ENCODE measurements at regions of chr22 and their contacts with region 1.

Region 1: GRCh38 chr22:22959147-22959827 is 71.7 kb downstream of the IGLL5 start:
- DNase-seq: peak; percentile 90
- ATAC-seq: peak; percentile 52
- H3K4me3 ChIP-seq: no peak overlapping the region
- H3K4me3 Mint-ChIP-seq: no peak overlapping the region
- H3K27ac ChIP-seq: no peak overlapping the region
- H3K27ac Mint-ChIP-seq: peak overlapping the region; percentile 43
- H3K4me1 ChIP-seq: peaks cover 11 to 18% of the 10 kb centered on the region in 2 donors
- H3K4me1 Mint-ChIP-seq: peaks cover 15% of the 10 kb centered on the region
- H3K27me3 ChIP-seq: no peaks in the 10 kb centered on the region
- H3K27me3 Mint-ChIP-seq: no peaks in the 10 kb centered on the region
- CTCF ChIP-seq: peak; percentile 95

Region 2: DNA sequence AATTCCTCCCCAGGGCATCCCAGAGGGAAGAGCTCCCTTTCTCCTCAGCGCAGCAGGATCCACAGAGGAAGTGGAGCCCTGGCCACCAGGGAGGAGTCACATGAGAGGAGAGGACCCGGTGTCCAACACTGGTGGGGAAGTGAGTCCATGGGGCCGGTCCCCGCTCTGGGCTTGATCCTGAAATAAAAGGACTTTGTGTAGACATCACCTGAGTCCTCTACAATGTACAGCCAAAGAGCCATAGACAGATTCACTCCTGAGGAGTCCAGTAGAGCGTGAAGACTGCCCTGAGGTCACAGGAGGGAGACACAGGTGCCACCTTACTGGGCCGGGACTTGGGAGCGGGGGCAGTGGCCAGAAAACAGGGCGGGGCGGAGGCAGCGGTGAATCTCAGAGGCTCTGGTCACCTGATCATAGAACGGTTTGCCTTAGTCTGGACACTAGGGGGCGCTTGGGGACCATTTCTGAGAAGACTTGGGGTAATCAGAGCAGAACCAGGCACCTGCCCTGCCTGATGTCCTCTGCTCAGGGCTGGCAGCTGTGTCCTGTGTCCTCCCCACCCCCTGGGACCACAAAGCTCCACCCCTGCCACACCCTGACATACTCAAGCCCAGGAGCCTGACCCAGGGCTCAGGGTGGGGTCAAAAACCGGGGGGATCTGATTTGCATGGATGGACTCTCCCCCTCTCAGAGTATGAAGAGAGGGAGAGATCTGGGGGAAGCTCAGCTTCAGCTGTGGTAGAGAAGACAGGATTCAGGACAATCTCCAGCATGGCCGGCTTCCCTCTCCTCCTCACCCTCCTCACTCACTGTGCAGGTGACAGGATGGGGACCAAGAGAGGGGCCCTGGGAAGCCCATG is 602.0 kb before region 1 on chr22:
- CTCF ChIA-PET with region 1: interaction called, 10 read pairs
- POLR2A ChIA-PET with region 1: interaction called, 5 read pairs
- intact Hi-C with region 1: loop called (anchors 2 kb)
- DNase-seq: peak; percentile 93
- ATAC-seq: peak; percentile 90
- H3K4me3 ChIP-seq: peak overlapping the region in 3 of 5 experiments; percentile 18 to 27 (median 26)
- H3K4me3 Mint-ChIP-seq: peak overlapping the region; percentile 65
- H3K27ac ChIP-seq: peak overlapping the region; percentile 61 to 71
- H3K27ac Mint-ChIP-seq: peak overlapping the region; percentile 90
- H3K4me1 ChIP-seq: peaks cover 29 to 49% of the 10 kb centered on the region in 2 donors
- H3K4me1 Mint-ChIP-seq: peaks cover 59% of the 10 kb centered on the region
- H3K27me3 ChIP-seq: no peaks in the 10 kb centered on the region
- H3K27me3 Mint-ChIP-seq: no peaks in the 10 kb centered on the region
- CTCF ChIP-seq: peak; percentile 72

Region 3: GRCh38 chr22:22692707-22693530 is 266.4 kb before region 1 on chr22:
- CTCF ChIA-PET with region 1: interaction called, 26 read pairs
- POLR2A ChIA-PET with region 1: no interaction called
- intact Hi-C with region 1: no loop called
- DNase-seq: peak; percentile 83
- ATAC-seq: peak; percentile 81
- H3K4me3 ChIP-seq: no peak overlapping the region
- H3K4me3 Mint-ChIP-seq: peak overlapping the region; percentile 71
- H3K27ac ChIP-seq: peak overlapping the region in 1 of 2 donors; percentile 26
- H3K27ac Mint-ChIP-seq: peak overlapping the region; percentile 85
- H3K4me1 ChIP-seq: peaks cover 28 to 44% of the 10 kb centered on the region in 2 donors
- H3K4me1 Mint-ChIP-seq: peaks cover 34% of the 10 kb centered on the region
- H3K27me3 ChIP-seq: no peaks in the 10 kb centered on the region
- H3K27me3 Mint-ChIP-seq: no peaks in the 10 kb centered on the region
- CTCF ChIP-seq: peak; percentile 87

Region 4: GRCh38 chr22:22779213-22779612 is 180.1 kb before region 1 on chr22:
- CTCF ChIA-PET with region 1: interaction called, 13 read pairs
- POLR2A ChIA-PET with region 1: no interaction called
- intact Hi-C with region 1: no loop called
- DNase-seq: no peak
- ATAC-seq: no peak
- H3K4me3 ChIP-seq: no peak overlapping the region
- H3K4me3 Mint-ChIP-seq: no peak overlapping the region
- H3K27ac ChIP-seq: no peak overlapping the region
- H3K27ac Mint-ChIP-seq: no peak overlapping the region
- H3K4me1 ChIP-seq: peaks cover 8% of the 10 kb centered on the region in 2 donors
- H3K4me1 Mint-ChIP-seq: peaks cover 9% of the 10 kb centered on the region
- H3K27me3 ChIP-seq: no peaks in the 10 kb centered on the region
- H3K27me3 Mint-ChIP-seq: peaks cover 13% of the 10 kb centered on the region
- CTCF ChIP-seq: no peak

Region 5: GRCh38 chr22:22903355-22903777 is 55.9 kb before region 1 on chr22:
- CTCF ChIA-PET with region 1: interaction called, 19 read pairs
- POLR2A ChIA-PET with region 1: no interaction called
- intact Hi-C with region 1: no loop called
- DNase-seq: no peak
- ATAC-seq: no peak
- H3K4me3 ChIP-seq: peak overlapping the region in 1 of 5 experiments; percentile 18
- H3K4me3 Mint-ChIP-seq: peak overlapping the region; percentile 69
- H3K27ac ChIP-seq: peak overlapping the region; percentile 52 to 53
- H3K27ac Mint-ChIP-seq: peak overlapping the region; percentile 61
- H3K4me1 ChIP-seq: peaks cover 43 to 77% of the 10 kb centered on the region in 2 donors
- H3K4me1 Mint-ChIP-seq: peaks cover 69% of the 10 kb centered on the region
- H3K27me3 ChIP-seq: no peaks in the 10 kb centered on the region
- H3K27me3 Mint-ChIP-seq: no peaks in the 10 kb centered on the region
- CTCF ChIP-seq: no peak

Region 6: DNA sequence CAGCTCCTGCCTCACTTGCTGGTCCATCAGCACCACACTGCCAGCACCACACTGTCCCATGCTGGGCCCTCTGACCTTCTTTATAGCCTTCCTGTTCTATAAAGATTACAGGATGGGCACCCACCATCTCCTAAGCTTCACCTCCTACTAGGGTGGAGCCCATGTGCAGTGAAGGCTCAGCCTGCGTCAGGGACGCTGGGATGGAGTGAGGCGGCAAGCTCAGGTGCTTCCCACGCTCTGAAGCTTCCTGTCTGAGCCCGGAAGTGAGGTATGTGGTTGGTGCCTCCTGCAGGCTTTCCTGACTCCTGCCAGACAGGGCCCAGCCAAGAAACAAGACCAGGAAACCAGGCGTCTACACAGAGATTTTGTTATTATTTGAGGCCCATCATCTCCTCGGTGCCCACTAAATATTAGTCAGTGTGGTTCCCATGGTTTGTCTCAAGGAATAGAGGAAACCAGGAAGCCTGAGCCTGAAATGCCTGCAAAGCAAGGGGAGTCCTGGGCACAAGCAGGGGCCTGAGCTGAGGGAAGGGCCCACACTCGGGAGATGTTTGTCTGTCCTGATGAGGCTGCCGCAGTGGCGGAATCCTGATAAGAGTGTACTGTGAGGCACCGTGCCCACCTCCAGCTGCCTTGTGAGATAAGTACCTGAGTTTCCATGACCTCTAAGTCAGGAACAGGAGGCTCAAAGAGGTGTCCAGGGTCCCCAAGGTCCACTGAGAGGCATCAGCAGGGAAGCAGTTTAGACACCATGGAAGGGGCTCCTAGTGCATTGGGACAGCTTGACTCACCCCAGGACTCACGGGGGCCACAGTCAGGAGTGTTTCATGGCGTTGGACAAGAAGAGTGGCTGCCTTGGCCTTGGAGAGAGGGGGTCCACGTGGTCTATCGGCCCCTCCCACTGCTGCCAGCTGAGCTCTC is 160.5 kb after region 1 on chr22:
- CTCF ChIA-PET with region 1: interaction called, 84 read pairs
- POLR2A ChIA-PET with region 1: no interaction called
- intact Hi-C with region 1: no loop called
- DNase-seq: peak; percentile 56
- ATAC-seq: no peak
- H3K4me3 ChIP-seq: no peak overlapping the region
- H3K4me3 Mint-ChIP-seq: no peak overlapping the region
- H3K27ac ChIP-seq: peak overlapping the region in 1 of 2 donors; percentile 19
- H3K27ac Mint-ChIP-seq: peak overlapping the region; percentile 73
- H3K4me1 ChIP-seq: peaks cover 5 to 12% of the 10 kb centered on the region in 2 donors
- H3K4me1 Mint-ChIP-seq: peaks cover 14% of the 10 kb centered on the region
- H3K27me3 ChIP-seq: no peaks in the 10 kb centered on the region
- H3K27me3 Mint-ChIP-seq: no peaks in the 10 kb centered on the region
- CTCF ChIP-seq: no peak

Region 7: DNA sequence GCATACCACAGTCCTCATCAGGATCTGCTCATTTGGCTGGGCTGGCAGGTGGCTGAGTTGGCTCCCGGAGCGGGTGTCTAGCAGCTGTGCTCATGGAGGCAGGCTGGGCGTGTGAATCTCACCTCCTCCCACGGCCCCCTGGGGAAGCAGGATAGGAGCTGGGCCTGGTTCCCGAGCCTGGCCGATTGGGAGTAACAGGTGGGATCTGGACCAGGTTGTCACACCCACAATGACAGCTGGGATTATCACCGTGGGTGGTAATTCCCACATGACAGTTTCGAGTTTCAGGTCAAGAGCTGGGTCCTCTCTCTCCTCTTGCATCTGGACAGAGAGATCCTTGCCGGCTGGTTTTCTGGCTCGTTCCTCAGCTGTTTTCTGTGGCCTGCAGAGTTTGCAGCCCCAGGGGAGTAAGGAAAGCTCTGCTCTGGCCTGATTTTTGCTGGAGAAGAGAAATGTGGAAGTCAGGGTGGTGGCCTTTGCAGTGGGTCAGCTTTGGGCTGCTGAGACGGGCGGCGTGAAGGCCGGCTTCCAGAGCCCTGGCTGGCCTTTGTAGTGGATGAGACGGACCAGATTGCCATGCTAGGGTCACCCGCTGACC is 278.0 kb after region 1 on chr22:
- CTCF ChIA-PET with region 1: no interaction called
- POLR2A ChIA-PET with region 1: no interaction called
- intact Hi-C with region 1: no loop called
- DNase-seq: no peak
- ATAC-seq: no peak
- H3K4me3 ChIP-seq: no peak overlapping the region
- H3K4me3 Mint-ChIP-seq: no peak overlapping the region
- H3K27ac ChIP-seq: no peak overlapping the region
- H3K27ac Mint-ChIP-seq: no peak overlapping the region
- H3K4me1 ChIP-seq: peaks cover 21 to 38% of the 10 kb centered on the region in 2 donors
- H3K4me1 Mint-ChIP-seq: peaks cover 39% of the 10 kb centered on the region
- H3K27me3 ChIP-seq: peaks cover 0 to 3% (median 0%) of the 10 kb centered on the region in 4 experiments
- H3K27me3 Mint-ChIP-seq: no peaks in the 10 kb centered on the region
- CTCF ChIP-seq: no peak

Measured in B cell (primary cell).